ENCODE measurements at regions of chr12 and their contacts with region 1.

Region 1: DNA sequence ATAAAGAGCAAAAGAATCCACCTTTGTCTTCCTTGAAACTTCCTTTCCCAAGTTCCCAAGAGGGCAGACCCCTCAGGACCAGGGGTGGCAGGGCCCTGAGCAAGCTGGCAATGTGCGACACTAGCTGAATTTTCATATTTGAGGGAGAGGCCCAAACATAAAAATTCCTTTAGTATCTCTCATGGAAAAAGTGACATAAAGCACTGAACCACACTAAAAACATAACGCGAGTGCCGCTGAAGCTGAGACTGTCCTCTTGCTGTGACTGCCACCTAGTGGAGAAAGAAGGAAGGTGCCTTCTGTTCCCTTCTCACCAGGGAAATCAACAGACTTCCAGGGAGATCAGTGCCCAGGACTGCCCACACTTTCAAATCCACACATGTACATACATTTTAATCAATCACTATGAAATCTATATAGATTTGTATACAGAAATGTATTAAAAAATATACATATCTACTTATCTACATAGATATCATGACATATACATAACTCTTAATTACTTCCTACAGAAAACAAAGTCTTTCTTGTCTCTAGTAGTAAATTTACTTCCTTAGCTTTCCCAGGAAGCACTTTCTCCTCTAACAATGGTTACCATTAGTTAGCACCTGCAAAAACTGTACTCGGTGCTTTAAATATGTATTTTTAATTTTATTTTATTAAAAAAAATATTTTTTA is 53.8 kb downstream of the SSH1 start:
- DNase-seq: peak; percentile 54
- H3K4me3 Mint-ChIP-seq: no peak overlapping the region
- H3K27ac Mint-ChIP-seq: peak overlapping the region; percentile 77
- H3K4me1 Mint-ChIP-seq: peaks cover 5% of the 10 kb centered on the region
- H3K27me3 Mint-ChIP-seq: no peaks in the 10 kb centered on the region

Region 2: GRCh38 chr12:108568338-108569154 is 235.0 kb before region 1 on chr12:
- intact Hi-C with region 1: loop called (anchors 1 kb)
- DNase-seq: peak; percentile 76
- H3K4me3 Mint-ChIP-seq: peak overlapping the region; percentile 77
- H3K27ac Mint-ChIP-seq: peak overlapping the region; percentile 88
- H3K4me1 Mint-ChIP-seq: peaks cover 75% of the 10 kb centered on the region
- H3K27me3 Mint-ChIP-seq: no peaks in the 10 kb centered on the region

Region 3: GRCh38 chr12:108618079-108618952 is 185.3 kb before region 1 on chr12:
- intact Hi-C with region 1: loop called (anchors 1 kb)
- DNase-seq: peak; percentile 69
- H3K4me3 Mint-ChIP-seq: no peak overlapping the region
- H3K27ac Mint-ChIP-seq: peak overlapping the region; percentile 57
- H3K4me1 Mint-ChIP-seq: peaks cover 57% of the 10 kb centered on the region
- H3K27me3 Mint-ChIP-seq: peaks cover 2% of the 10 kb centered on the region

Region 4: DNA sequence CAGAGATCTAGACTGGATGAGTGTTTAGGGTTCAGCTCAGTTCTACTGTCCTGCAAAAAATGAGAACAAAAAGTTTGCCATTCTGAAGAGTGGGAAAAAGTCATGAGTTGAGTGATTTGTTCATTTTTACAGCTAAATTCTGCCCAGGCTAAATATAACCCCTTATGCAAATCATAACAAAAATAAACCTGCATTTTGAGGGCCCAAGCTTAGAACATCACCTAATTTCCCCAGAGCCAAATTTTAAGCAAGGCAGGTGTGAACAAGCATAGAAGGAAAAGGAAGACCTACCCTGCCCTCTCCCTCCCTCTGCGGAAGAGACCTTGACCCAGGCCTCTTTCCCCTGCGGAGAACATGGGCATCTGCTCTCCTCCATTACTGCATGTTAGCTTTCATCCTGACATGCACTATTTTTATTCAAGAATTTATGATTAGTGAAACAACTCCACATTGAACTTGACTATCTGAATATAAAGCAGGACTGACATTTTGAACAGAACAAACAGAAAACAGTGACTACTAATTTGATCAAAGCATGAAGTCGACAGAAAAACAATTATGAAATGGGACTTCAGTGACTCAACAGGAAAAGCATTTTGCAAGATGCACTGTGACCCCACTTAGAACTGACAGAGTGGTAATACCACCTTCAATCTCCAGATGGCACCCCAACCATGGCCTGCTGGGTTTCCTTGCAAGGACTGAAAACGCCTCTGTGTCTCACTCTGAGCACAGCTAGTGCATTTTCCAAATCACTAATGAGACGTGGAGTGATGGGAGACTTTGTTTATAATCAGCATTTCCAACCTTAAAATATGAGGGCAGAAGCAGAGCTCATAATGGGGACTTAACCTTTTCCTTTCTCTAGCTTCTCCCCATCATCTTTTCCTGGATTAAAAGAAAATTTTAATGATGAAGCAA is 139.0 kb before region 1 on chr12:
- intact Hi-C with region 1: loop called (anchors 1 kb)
- DNase-seq: peak; percentile 79
- H3K4me3 Mint-ChIP-seq: no peak overlapping the region
- H3K27ac Mint-ChIP-seq: peak overlapping the region; percentile 72
- H3K4me1 Mint-ChIP-seq: peaks cover 17% of the 10 kb centered on the region
- H3K27me3 Mint-ChIP-seq: no peaks in the 10 kb centered on the region

Region 5: DNA sequence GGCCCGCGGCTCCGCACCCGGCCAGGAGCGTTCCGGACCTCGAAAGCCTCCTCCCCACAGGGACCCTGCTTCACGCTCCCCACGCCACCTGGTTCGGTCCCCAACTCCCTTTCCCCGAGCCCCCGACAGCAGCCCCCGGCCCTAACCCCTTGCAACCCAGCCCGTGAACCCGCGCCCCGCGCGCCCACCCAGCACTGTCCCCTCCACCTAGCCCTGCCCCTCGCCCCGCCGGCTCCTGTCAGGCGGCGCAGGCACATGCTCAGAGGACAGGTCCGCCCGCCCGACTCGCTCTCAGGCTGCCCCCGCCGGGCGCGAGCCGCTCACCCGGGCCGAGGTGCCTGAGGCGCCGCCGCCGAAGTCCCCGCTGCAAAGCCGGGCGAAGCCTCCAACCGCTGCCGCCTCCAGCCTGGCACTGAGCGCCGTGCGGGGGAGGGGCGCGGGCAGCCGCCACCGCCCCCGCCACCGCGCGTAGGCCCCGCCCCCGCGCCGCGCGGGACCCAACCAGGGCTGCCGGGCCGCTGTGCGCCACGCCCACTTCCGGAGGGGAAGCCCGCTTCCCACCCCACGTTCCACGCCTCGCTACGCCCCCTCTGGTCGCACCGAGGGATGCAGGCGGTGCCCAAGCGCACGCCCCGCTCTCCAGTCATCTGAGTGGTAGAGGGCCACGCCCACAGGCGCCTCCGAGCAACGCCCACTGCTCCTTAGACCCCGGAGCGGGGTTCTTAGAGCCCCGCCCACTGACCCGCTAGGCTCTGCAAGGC is 72.3 kb before region 1 on chr12 and contains the start of gene CORO1C:
- intact Hi-C with region 1: loop called (anchors 1 kb)
- DNase-seq: peak; percentile 96
- H3K4me3 Mint-ChIP-seq: peak within 1 kb of the TSS; percentile 89
- H3K27ac Mint-ChIP-seq: peak within 1 kb of the TSS; percentile 94
- H3K4me1 Mint-ChIP-seq: peaks cover 38% of the 10 kb centered on the region
- H3K27me3 Mint-ChIP-seq: peaks cover 16% of the 10 kb centered on the region
- total RNA-seq, gene CORO1C: 46.1 and 49.7 TPM in 2 replicates

Region 6: DNA sequence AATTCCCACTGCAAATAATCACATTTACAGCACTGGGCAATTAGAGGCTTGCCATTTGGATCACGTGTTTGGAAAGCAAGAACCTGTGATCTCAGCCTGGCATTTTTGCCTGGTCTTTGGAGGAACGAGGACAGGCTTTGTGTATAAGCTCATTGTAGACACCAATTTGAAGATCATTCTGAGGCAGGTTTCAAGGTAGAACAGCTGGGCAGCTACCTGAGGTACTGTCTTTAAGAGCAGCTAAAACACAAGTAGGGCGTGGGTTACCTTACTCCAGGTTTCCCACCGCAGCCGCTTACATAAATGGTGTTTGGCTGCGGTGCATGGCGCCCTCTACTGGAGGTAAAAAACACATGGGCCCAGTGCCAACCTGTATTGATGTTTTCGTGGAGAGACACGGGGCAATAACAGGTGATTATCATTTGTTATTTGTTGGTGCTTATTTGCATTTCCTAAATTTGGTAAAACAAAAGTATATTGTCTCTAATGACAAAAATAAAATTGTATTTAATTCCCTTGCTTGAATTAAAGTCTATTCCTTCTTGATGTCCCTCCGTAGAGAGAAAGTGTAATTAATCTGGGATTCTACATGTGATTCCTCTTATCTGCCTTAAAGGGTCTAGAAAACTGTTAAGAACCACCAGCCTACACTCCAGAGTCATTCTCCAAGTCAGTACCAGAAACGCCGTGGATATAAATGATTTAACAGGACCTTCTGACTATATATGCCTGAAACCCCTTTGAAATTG is 147.6 kb after region 1 on chr12:
- intact Hi-C with region 1: loop called (anchors 1 kb)
- DNase-seq: peak; percentile 50
- H3K4me3 Mint-ChIP-seq: no peak overlapping the region
- H3K27ac Mint-ChIP-seq: no peak overlapping the region
- H3K4me1 Mint-ChIP-seq: peaks cover 7% of the 10 kb centered on the region
- H3K27me3 Mint-ChIP-seq: peaks cover 17% of the 10 kb centered on the region